A673 (cell line): ENCODE measurements at regions of chr2 and their contacts with region 1.

Region 1: DNA sequence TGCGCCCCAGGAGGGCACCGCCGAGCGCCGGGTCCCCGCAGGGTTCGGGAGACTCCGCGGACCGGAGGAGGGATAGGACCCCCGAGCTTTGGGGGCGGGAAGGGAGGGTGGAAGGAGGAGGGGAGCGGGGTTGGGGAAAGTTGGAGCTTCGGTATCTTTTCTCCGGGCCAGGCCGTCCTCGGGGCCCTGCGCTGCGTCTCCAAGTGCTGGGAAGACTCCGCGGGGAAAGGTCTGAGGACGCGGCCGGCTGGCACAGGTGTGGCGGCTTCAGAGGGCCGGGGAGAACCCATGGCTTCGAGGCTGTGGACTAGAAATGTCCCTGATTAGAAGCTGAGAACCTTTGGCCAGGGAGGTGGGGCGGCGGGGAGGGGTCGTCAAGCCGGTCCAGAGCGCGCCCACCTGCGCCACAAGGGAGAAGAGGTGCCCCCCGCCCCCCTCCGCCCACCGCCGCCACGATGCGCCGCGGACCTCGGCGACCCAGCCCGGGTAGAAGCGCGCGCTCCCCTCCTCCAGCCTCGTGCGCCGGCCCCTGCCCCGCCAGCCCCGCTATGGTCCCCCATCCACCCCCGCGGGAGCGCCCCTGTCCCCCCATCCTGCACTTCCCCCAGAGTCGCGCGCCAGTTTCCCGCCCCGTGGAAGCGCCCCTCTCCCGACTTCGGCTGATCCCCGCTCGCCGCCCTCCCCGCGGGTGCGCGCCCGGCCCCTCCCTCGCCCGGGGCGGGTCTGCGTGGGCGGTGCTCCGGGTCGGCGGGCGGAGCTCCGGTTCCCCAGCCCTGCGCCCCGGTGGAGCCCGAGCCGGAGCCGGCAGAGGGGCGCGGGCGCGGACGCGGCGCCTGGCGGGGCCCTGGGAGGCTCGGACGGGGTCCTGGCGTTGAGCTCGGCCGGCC is at the start of gene SNTG2:
- DNase-seq: peak; percentile 65
- H3K4me3 ChIP-seq: peak within 1 kb of the TSS; percentile 58
- H3K27ac ChIP-seq: peak within 1 kb of the TSS; percentile 42
- H3K4me1 ChIP-seq: peaks cover 6% of the 10 kb centered on the region
- H3K27me3 ChIP-seq: peaks cover 20% of the 10 kb centered on the region
- CTCF ChIP-seq: no peak
- total RNA-seq, gene SNTG2: 3.7 and 3.8 TPM in 2 replicates

Region 2: GRCh38 chr2:1079873-1080799 is 129.8 kb after region 1 on chr2:
- CTCF ChIA-PET with region 1: no interaction called
- POLR2A ChIA-PET with region 1: no interaction called
- intact Hi-C with region 1: loop called (anchors 5 kb)
- DNase-seq: no peak
- H3K4me3 ChIP-seq: no peak overlapping the region
- H3K27ac ChIP-seq: no peak overlapping the region
- H3K4me1 ChIP-seq: no peaks in the 10 kb centered on the region
- H3K27me3 ChIP-seq: no peaks in the 10 kb centered on the region
- CTCF ChIP-seq: no peak

Region 3: DNA sequence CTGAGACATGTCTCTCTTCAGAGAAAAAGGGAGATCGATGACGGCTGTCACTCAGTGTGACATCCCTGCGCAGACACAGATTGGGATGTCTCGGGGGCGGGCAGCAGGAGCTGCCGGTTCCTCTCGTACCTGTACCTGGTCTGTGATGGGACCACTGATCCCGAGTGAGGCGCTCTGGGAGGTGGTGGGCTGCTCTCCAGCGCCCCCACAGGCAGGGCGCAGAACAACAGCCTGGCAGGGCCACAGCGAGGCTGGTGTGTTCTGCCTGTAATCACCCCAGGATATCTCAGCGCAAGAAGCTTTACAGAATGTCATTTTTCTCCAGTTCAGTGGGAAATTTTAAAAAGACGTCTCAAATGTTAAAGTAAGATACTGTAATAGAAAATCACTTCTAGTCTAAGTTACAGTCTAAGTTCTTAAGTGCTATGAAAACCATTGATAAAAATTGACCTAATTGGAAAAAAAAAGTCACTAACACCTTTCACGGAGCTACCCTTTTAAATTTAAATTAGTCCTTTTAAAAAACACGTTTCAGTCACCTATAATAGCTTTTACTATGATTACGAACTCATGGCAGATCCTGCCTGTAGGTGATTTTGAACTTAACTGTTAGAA is 190.2 kb after region 1 on chr2:
- CTCF ChIA-PET with region 1: interaction called, 3 read pairs
- POLR2A ChIA-PET with region 1: no interaction called
- intact Hi-C with region 1: loop called (anchors 2 kb)
- DNase-seq: peak; percentile 26
- H3K4me3 ChIP-seq: no peak overlapping the region
- H3K27ac ChIP-seq: no peak overlapping the region
- H3K4me1 ChIP-seq: no peaks in the 10 kb centered on the region
- H3K27me3 ChIP-seq: no peaks in the 10 kb centered on the region
- CTCF ChIP-seq: peak; percentile 91

Region 4: DNA sequence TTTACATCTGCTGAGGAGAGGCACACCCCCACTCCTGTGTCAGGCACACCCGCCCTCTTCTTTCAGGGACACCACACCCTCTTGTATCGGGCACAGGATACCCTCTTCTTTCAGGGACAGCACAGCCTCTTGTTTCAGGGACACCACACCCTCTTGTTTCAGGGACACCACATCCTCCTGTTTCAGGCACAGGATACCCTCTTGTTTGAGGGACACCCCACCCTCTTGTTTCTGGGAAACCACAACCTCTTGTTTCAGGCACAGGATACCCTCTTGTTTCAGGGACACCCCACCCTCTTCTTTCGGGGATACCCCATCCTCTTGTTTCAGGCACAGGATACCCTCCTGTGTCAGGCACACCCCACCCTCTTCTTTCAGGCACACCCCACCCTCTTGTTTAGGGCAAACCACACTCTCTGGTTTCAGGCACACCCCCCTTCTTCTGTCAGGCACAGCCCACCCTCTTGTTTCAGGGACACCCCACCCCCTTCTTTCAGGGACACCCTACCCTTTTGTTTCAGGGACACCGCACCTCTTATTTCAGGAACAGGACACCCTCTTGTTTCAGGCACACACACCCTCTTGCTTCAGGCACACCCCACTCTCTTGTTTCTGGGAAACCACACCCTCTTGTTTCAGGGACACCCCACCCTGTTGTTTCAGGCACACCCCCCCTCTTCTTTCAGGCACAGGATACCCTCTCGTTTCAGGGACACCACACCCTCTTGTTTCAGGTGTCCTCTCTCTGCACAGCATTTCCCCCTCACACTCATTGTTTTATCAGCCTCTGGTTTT is 559.1 kb after region 1 on chr2:
- CTCF ChIA-PET with region 1: no interaction called
- POLR2A ChIA-PET with region 1: no interaction called
- intact Hi-C with region 1: no loop called
- DNase-seq: no peak
- H3K4me3 ChIP-seq: no peak overlapping the region
- H3K27ac ChIP-seq: no peak overlapping the region
- H3K4me1 ChIP-seq: no peaks in the 10 kb centered on the region
- H3K27me3 ChIP-seq: no peaks in the 10 kb centered on the region
- CTCF ChIP-seq: no peak